Heart left ventricle (tissue), 16 donors: ENCODE measurements at regions of chr6 and their contacts with region 1.

Region 1: DNA sequence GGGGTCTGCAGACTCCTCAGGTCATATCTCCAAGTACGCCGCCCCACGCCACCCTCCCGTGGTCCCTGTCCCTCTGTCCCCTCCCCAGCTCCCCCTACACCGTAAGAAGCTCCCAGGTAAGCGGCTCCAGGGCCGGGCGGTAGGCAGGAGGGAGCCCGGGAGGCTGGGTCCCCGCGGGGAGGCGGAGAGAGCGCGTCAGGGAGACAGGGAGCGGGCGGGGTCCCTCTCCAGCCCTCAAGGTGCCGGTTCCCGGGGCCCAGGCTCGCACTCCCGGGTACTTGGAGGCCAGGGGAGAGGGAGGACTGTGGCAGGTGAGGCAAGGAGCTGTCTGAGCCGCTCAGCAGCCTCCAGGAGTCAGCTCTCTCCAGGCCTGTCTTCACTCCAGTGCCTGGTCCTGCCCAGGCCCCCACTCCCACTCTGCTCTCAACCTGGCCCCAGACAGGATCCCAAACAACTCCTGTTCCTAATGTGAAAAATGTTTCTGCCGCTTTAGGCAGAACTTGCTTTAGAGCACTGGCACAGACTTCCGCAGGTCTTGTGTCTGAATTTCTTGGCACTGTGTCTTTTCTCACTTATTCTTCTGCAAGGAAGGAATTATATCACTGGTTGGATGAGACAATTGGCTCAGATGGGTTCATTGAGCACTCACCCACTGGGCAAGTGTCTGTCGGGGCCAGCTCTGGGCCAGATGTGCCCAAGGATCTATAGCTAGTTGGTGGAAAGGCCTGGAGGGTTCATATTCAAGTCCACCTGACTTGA is 36.6 kb downstream of the HLA-G start:
- DNase-seq: no peak
- ATAC-seq: peak in 1 of 4 donors; percentile 13
- H3K4me3 ChIP-seq: no peak overlapping the region
- H3K27ac ChIP-seq: no peak overlapping the region
- H3K4me1 ChIP-seq: no peaks in the 10 kb centered on the region
- H3K27me3 ChIP-seq: peaks cover 0 to 40% (median 16%) of the 10 kb centered on the region in 9 donors
- CTCF ChIP-seq: no peak
- POLR2A ChIP-seq: no peak

Region 2: DNA sequence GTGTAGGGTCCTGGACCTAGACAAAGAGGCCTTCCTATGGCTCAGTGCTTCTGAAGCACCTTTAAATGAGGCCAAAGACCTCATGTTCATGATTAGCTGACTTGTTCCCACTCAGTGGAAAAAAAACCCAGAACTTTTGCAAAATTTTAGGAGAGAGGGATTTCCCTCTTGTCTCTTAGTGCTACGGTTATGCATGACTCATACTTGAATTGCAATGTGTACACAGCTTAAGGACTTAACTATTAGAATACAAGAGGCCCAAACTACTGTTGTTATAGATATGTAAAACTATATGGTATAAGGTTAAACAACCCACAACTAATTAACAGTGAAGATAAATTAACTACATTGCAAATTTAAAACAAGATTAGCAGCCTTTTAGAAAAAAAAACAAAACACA is 45.8 kb after region 1 on chr6:
- intact Hi-C with region 1: loop called in 2 of 10 experiments (anchors 5 to 10 kb)
- DNase-seq: no peak
- ATAC-seq: no peak
- H3K4me3 ChIP-seq: no peak overlapping the region
- H3K27ac ChIP-seq: no peak overlapping the region
- H3K4me1 ChIP-seq: no peaks in the 10 kb centered on the region
- H3K27me3 ChIP-seq: no peaks in the 10 kb centered on the region
- CTCF ChIP-seq: no peak
- POLR2A ChIP-seq: no peak

Region 3: GRCh38 chr6:29995340-29995777 is 131.1 kb after region 1 on chr6:
- intact Hi-C with region 1: loop called in 1 of 10 experiments (anchors 5 kb)
- DNase-seq: no peak
- ATAC-seq: peak in 1 of 4 donors; percentile 47
- H3K4me3 ChIP-seq: no peak overlapping the region
- H3K27ac ChIP-seq: no peak overlapping the region
- H3K4me1 ChIP-seq: no peaks in the 10 kb centered on the region
- H3K27me3 ChIP-seq: no peaks in the 10 kb centered on the region
- CTCF ChIP-seq: no peak
- POLR2A ChIP-seq: no peak